BJ (cell line): ENCODE measurements at regions of chr2 and their contacts with region 1.

Region 1: DNA sequence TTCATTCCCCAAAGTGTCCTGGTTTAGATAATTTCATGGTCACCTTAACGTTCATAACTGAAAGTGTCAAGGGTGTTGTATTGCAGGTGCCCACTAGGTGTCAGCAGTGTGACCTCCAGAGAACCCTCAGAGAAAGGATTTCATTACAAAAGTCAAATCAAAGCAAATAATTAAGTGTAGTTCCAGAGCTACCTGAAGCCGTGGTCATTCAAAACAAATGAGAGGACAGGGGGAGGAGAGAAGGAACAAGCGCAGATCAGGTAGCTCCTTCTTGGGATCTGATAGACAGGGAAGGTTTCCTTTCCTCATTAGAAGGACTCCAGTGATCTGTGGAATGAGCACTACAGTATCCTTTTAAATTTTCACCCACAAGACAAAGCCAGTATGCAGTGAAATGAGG is at the start of gene SLC9A4:
- DNase-seq: peak; percentile 4
- H3K4me3 ChIP-seq: no peak within 1 kb of the TSS
- H3K27me3 ChIP-seq: peaks cover 4% of the 10 kb centered on the region
- CTCF ChIP-seq: peak; percentile 90
- polyA plus RNA-seq, gene SLC9A4: not detected in 2 replicates

Region 2: GRCh38 chr2:102385522-102385921 is 87.5 kb before region 1 on chr2:
- CTCF ChIA-PET with region 1: no interaction called
- POLR2A ChIA-PET with region 1: no interaction called
- DNase-seq: no peak
- H3K4me3 ChIP-seq: no peak overlapping the region
- H3K27me3 ChIP-seq: no peaks in the 10 kb centered on the region; the same call in 1 of the 2 replicates
- CTCF ChIP-seq: no peak

Region 3: GRCh38 chr2:102460467-102460866 is 12.6 kb before region 1 on chr2:
- CTCF ChIA-PET with region 1: interaction called, 28 read pairs
- POLR2A ChIA-PET with region 1: no interaction called
- DNase-seq: no peak
- H3K4me3 ChIP-seq: no peak overlapping the region
- H3K27me3 ChIP-seq: no peaks in the 10 kb centered on the region
- CTCF ChIP-seq: no peak

Region 4: GRCh38 chr2:102487761-102488466 is 14.9 kb after region 1 on chr2:
- CTCF ChIA-PET with region 1: interaction called, 39 read pairs
- POLR2A ChIA-PET with region 1: no interaction called
- DNase-seq: peak; percentile 67
- H3K4me3 ChIP-seq: no peak overlapping the region
- H3K27me3 ChIP-seq: 0 out of 2 replicates have a peak, but pooled peaks cover 1% of the 10 kb centered on the region
- CTCF ChIP-seq: no peak

Region 5: GRCh38 chr2:102592597-102592996 is 119.6 kb after region 1 on chr2:
- CTCF ChIA-PET with region 1: interaction called, 18 read pairs
- POLR2A ChIA-PET with region 1: no interaction called
- DNase-seq: no peak
- H3K4me3 ChIP-seq: no peak overlapping the region
- H3K27me3 ChIP-seq: no peaks in the 10 kb centered on the region; the same call in 1 of the 2 replicates
- CTCF ChIP-seq: peak; percentile 44

Region 6: DNA sequence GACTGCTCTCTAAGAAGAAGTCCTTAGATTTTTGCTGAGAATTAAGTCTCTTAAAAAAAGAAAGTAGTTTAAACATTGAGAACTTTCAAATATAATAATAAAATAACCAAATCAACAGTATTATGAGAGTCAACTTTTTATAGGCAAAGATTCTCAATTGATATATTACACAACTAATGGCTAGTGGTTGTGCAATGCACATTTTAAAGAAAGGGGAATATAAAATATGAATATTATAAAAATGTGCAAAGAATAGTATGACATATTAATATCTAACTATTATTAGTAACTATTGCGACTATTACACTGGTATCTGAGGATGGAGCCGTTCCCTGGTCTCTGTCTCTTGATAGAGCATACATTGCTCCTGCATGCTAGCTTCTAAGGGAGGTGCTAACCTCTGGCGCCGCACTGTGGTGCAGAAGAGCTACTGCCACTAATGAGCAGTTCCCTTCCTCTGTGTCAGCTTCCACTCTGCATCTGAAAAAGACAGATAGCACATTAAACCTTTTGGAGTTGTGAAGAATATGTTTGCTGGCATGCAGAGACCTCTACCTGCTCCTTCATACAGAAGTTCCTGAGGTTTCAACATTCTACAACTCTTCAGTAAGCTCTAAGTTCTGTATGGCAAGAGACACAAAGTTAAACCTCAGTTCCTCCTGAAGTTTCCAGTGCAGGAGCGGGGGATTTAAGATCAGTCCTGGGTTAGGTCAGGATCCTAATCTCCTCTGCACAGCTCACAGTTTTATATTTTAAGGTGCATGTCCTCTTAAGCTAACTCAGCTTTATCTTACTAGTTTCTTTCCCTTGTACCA is 142.8 kb after region 1 on chr2:
- CTCF ChIA-PET with region 1: interaction called, 124 read pairs
- POLR2A ChIA-PET with region 1: no interaction called
- DNase-seq: no peak
- H3K4me3 ChIP-seq: no peak overlapping the region
- H3K27me3 ChIP-seq: peaks cover 17% of the 10 kb centered on the region
- CTCF ChIP-seq: peak; percentile 95